ENCODE measurements at regions of chr9 and their contacts with region 1.

Region 1: DNA sequence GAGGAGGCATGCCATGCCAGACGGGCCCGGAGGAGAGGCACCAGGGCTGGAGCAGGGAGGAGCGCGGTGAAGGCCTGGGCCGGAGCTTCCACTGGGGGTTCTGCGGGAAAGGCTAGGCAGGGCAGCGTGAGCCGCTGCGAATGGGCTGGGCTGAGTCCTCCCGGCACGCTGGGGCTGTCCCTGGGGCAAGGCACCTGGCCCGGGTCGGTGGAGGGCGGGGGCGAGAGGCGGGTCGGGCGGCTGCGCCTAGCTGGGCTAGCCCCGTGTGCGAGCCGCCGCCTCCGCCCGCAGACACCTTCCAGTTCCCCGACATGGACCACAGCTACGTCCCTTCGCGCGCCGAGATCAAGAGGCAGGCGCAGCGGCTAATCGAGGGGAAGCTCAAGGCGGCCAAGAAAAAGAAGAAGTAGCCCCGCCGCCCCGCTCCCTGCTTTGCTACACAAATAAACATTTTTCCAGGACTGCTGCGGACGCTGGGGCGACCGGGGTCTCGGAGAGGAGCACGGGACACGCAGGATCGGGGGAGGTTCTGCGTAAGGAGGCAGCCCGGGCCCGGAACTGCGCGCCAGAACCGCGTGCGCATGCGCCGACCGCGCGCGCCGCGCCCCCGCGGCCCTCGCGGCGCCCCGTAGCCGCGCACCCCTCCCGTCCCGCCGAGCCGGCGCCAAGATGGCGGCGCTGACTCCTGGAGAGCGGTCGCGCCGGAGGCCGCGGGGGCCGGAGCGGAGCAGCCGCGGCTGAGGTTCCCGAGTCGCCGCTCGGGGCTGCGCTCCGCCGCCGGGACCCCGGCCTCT is at the start of gene RABL6:
- DNase-seq: peak; percentile 60 to 94 (median 78)
- ATAC-seq: peak; percentile 88
- H3K4me3 ChIP-seq: peak within 1 kb of the TSS; percentile 68
- H3K4me3 Mint-ChIP-seq: peak within 1 kb of the TSS; percentile 90
- H3K27ac ChIP-seq: peak within 1 kb of the TSS; percentile 53 to 81
- H3K27ac Mint-ChIP-seq: peak within 1 kb of the TSS; percentile 81
- H3K4me1 ChIP-seq: peaks cover 49% of the 10 kb centered on the region
- H3K4me1 Mint-ChIP-seq: peaks cover 37% of the 10 kb centered on the region
- H3K27me3 ChIP-seq: no peaks in the 10 kb centered on the region
- H3K27me3 Mint-ChIP-seq: no peaks in the 10 kb centered on the region
- CTCF ChIP-seq: no peak
- total RNA-seq, gene RABL6: 46.4 to 48.5 TPM

Region 2: GRCh38 chr9:136400038-136400834 is 407.2 kb before region 1 on chr9 and contains the start of gene SNAPC4:
- CTCF ChIA-PET with region 1: no interaction called
- POLR2A ChIA-PET with region 1: no interaction called
- intact Hi-C with region 1: loop called in 1 of 2 experiments (anchors 10 kb)
- DNase-seq: peak; percentile 75 to 95 (median 86)
- ATAC-seq: peak; percentile 66
- H3K4me3 ChIP-seq: peak within 1 kb of the TSS; percentile 72
- H3K4me3 Mint-ChIP-seq: peak within 1 kb of the TSS; percentile 88
- H3K27ac ChIP-seq: no peak within 1 kb of the TSS
- H3K27ac Mint-ChIP-seq: peak within 1 kb of the TSS; percentile 55
- H3K4me1 ChIP-seq: peaks cover 59% of the 10 kb centered on the region
- H3K4me1 Mint-ChIP-seq: peaks cover 41% of the 10 kb centered on the region
- H3K27me3 ChIP-seq: no peaks in the 10 kb centered on the region
- H3K27me3 Mint-ChIP-seq: no peaks in the 10 kb centered on the region
- CTCF ChIP-seq: peak; percentile 87
- total RNA-seq, gene SNAPC4: 7.7 to 8.0 TPM

Region 3: GRCh38 chr9:136840140-136840687 is 32.7 kb after region 1 on chr9:
- CTCF ChIA-PET with region 1: interaction called, 18 read pairs
- POLR2A ChIA-PET with region 1: interaction called, 11 read pairs
- intact Hi-C with region 1: loop called (anchors 2 to 5 kb)
- DNase-seq: no peak
- ATAC-seq: no peak
- H3K4me3 ChIP-seq: no peak overlapping the region
- H3K4me3 Mint-ChIP-seq: no peak overlapping the region
- H3K27ac ChIP-seq: no peak overlapping the region
- H3K27ac Mint-ChIP-seq: no peak overlapping the region
- H3K4me1 ChIP-seq: peaks cover 33% of the 10 kb centered on the region
- H3K4me1 Mint-ChIP-seq: peaks cover 15% of the 10 kb centered on the region
- H3K27me3 ChIP-seq: peaks cover 4 to 10% of the 10 kb centered on the region in 2 experiments
- H3K27me3 Mint-ChIP-seq: peaks cover 14% of the 10 kb centered on the region
- CTCF ChIP-seq: no peak

Region 4: DNA sequence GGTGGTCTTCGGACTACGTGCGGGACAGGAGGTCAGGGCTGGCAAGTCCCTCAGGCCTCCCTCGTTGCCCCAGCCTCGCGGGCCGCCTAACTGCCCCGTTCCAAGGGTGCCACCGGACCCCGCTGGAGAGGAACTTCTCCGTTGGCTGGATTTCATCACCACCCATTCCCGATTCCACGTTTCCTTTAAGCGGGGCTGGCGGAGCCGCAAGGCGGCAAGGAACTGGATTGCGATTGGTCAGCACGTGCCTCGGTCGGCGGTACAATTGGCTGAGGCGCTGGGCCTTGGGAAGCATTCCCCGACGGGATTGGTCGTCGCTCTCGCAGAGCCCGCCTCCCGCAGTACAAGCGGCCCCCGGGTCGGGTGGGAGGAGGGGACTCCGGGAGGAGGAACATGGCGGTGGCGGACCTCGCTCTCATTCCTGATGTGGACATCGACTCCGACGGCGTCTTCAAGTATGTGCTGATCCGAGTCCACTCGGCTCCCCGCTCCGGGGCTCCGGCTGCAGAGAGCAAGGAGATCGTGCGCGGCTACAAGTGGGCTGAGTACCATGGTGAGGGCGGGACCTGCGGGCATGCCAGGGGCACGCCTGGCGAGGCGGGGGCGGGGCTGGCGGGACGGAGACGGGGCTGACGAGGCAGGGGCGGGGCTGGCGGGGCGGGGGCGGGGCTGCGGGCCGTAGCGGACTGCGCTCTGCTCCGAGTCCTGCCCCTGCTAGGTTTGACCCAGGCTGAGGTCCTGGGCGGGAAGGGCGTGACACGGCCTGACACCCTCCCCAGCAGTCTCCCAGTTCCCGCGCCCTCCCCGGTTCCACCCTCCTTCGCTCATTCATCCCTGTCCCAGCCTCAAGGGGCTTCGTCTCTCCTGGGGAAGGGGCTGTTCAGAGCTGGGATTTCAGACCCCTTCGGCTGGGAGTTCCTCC is 41.8 kb after region 1 on chr9 and contains the start of gene PHPT1:
- CTCF ChIA-PET with region 1: no interaction called
- POLR2A ChIA-PET with region 1: interaction called, 11 read pairs
- intact Hi-C with region 1: loop called (anchors 1 to 5 kb)
- DNase-seq: peak; percentile 89 to 98 (median 94)
- ATAC-seq: peak; percentile 92
- H3K4me3 ChIP-seq: peak within 1 kb of the TSS; percentile 84
- H3K4me3 Mint-ChIP-seq: peak within 1 kb of the TSS; percentile 97
- H3K27ac ChIP-seq: peak within 1 kb of the TSS in 1 of 2 donors; percentile 60
- H3K27ac Mint-ChIP-seq: peak within 1 kb of the TSS; percentile 91
- H3K4me1 ChIP-seq: peaks cover 45% of the 10 kb centered on the region
- H3K4me1 Mint-ChIP-seq: peaks cover 10% of the 10 kb centered on the region
- H3K27me3 ChIP-seq: peaks cover 15 to 16% of the 10 kb centered on the region in 2 experiments
- H3K27me3 Mint-ChIP-seq: peaks cover 21% of the 10 kb centered on the region
- CTCF ChIP-seq: no peak
- total RNA-seq, gene PHPT1: 13.6 to 17.8 TPM

Region 5: DNA sequence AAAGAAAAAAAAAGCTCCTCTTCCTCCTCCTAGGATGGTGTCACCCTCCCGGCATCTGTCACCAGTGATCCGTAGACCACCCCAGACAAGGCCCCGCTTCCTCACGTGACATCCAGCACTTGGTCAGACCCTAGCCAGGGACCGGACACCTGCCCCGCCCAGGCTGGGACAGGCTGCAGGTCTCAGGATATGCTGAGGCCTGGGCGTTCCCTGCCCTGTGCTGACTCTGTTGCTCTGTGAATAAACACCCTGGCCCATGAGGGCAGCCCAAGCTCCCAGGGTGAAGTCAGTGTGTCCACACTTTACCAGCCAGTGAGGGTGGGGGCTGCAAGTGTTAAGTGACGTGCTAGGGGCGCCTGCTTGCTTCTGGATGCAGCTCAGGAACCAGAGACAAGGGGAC is 53.1 kb after region 1 on chr9:
- CTCF ChIA-PET with region 1: no interaction called
- POLR2A ChIA-PET with region 1: no interaction called
- intact Hi-C with region 1: no loop called
- DNase-seq: peak in 1 of 14 experiments; percentile 13
- ATAC-seq: no peak
- H3K4me3 ChIP-seq: no peak overlapping the region
- H3K4me3 Mint-ChIP-seq: no peak overlapping the region
- H3K27ac ChIP-seq: no peak overlapping the region
- H3K27ac Mint-ChIP-seq: no peak overlapping the region
- H3K4me1 ChIP-seq: peaks cover 16% of the 10 kb centered on the region
- H3K4me1 Mint-ChIP-seq: peaks cover 15% of the 10 kb centered on the region
- H3K27me3 ChIP-seq: no peaks in the 10 kb centered on the region
- H3K27me3 Mint-ChIP-seq: no peaks in the 10 kb centered on the region
- CTCF ChIP-seq: no peak

Region 6: DNA sequence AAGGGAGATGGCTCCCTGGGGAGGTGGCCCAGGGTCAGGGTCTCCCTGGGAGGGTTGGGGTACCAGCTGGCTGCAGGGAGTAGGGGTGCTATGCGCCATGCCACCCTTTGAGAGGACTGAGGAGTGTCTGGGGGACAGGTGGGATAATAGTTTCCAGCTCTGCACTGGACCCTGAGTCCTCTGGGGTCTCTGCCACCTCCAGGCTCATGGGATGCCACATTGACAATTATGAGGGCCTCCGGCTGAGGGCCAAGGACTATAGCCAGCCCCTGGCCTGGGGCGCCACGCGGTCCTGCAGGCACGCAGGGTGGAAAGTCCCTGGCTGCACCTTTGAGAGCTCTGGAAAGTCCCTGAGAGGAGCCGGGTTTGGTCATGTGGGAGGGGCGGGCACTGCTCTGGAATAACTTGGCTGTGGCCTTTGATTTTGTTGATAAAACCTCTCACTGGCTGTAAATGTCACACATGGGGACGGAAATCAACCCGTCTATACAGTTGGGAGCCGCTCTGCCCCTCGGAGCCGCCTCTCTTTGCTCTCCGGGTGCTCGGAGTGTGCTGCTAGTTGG is 94.9 kb after region 1 on chr9:
- CTCF ChIA-PET with region 1: no interaction called
- POLR2A ChIA-PET with region 1: interaction called, 3 read pairs
- intact Hi-C with region 1: loop called in 1 of 2 experiments (anchors 10 kb)
- DNase-seq: peak; percentile 45 to 95 (median 76)
- ATAC-seq: peak; percentile 85
- H3K4me3 ChIP-seq: peak overlapping the region; percentile 53
- H3K4me3 Mint-ChIP-seq: peak overlapping the region; percentile 67
- H3K27ac ChIP-seq: peak overlapping the region; percentile 94 to 95
- H3K27ac Mint-ChIP-seq: peak overlapping the region; percentile 91
- H3K4me1 ChIP-seq: peaks cover 44% of the 10 kb centered on the region
- H3K4me1 Mint-ChIP-seq: peaks cover 35% of the 10 kb centered on the region
- H3K27me3 ChIP-seq: no peaks in the 10 kb centered on the region
- H3K27me3 Mint-ChIP-seq: no peaks in the 10 kb centered on the region
- CTCF ChIP-seq: no peak

Measured in CD4-positive, alpha-beta T cell (primary cell).